Right cardiac atrium (tissue), 5 donors: ENCODE measurements at regions of chr1 and their contacts with region 1.

Region 1: DNA sequence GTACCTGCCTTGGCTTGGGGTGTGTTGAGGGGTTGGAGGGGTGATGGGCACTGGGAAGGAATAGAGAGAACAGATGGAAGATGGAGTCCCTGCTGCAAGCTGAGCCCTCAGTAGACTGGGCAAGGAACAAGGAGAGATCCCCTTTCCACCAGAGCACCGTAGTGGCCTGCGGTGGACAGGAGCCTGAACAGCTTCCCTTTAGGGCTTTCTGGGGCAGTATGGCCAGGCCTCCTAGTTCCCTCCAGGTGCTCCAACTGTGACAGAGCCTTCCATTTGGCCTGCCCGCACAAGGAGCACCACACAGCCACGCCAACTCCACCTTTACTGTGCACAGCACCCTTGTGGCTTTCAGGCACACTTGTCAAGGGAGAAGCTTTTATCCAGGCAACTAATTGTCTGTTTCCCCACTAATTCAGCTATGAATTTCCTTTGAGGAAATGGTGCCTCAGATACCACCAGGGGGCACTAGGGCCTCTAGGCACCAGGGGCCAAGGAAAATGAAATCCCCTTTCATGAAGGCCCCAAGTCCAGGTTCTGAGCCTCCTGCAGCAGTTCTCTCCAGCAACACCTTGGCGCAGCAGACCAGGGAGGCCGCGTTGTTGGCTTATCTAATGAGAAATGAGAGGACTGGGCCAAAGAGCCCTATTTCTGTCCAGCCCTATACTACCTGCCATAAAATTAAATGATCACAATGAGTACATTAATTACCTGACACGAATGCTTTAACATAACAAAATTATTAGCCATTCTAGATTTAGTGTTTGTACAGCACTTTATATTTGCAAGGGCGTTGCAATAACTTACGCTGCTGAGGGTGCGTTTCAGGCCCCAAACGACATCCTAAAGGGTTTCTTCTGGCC is 23.1 kb upstream of the ERI3 start:
- DNase-seq: peak; percentile 27 to 58 (median 54)
- ATAC-seq: peak in 1 of 2 donors; percentile 34
- H3K4me3 ChIP-seq: no peak overlapping the region
- H3K27ac ChIP-seq: no peak overlapping the region
- H3K4me1 ChIP-seq: no peaks in the 10 kb centered on the region
- H3K27me3 ChIP-seq: no peaks in the 10 kb centered on the region

Region 2: GRCh38 chr1:44460107-44460882 is 82.1 kb after region 1 on chr1:
- intact Hi-C with region 1: no loop called
- DNase-seq: no peak
- ATAC-seq: no peak
- H3K4me3 ChIP-seq: no peak overlapping the region
- H3K27ac ChIP-seq: no peak overlapping the region
- H3K4me1 ChIP-seq: no peaks in the 10 kb centered on the region
- H3K27me3 ChIP-seq: no peaks in the 10 kb centered on the region

Region 3: GRCh38 chr1:44500181-44501046 is 122.3 kb after region 1 on chr1:
- intact Hi-C with region 1: loop called in 1 of 4 experiments (anchors 10 kb)
- DNase-seq: peak in 2 of 3 donors; percentile 17 to 50
- ATAC-seq: peak; percentile 55 to 68
- H3K4me3 ChIP-seq: peak overlapping the region; percentile 8
- H3K27ac ChIP-seq: no peak overlapping the region
- H3K4me1 ChIP-seq: no peaks in the 10 kb centered on the region
- H3K27me3 ChIP-seq: no peaks in the 10 kb centered on the region

Region 4: DNA sequence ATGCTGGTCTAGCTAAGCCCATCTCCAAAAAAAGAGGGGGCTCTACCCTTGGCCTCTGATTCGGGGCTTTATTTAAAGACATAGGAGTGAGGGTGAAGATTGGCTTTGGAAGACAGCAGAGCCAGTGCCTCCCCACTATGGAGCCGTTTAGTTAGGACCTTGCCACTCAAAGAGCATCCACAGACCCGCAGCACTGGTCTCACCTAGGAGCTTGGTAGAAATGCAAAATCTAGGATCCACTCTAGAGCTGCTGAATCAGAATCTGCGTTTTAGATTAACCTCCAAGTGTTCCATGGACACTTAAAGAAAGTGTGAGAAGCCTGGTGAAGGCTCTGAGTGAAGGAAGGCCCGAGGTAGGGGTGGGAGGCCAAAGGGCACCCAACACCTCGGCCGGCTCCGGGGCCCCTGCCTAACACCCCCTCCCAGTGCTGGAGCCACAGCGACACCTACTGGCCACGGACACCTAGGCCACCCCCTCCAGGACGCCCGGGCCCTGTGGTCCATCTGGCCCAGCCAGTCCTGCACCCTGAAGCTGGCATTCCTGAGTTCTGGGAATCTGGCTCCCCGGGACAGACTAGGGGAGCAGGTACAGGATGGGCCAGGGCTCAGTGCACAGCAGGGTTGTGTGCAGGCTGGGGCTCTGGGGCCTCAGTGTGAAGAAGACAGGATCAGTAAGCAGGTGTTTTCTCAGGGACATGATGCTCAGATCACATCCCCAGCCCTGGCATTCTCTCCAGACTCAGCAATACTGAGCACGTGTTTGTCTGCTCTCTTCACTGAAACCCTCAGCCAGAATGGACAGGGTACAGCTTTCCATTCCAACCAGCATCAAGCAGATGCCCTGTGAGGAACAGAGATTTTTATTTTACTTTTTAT is 217.0 kb after region 1 on chr1:
- intact Hi-C with region 1: loop called (anchors 2 to 5 kb)
- DNase-seq: peak; percentile 80 to 93 (median 91)
- ATAC-seq: peak; percentile 92 to 94
- H3K4me3 ChIP-seq: no peak overlapping the region
- H3K27ac ChIP-seq: no peak overlapping the region
- H3K4me1 ChIP-seq: no peaks in the 10 kb centered on the region
- H3K27me3 ChIP-seq: no peaks in the 10 kb centered on the region